Dorsolateral prefrontal cortex (tissue), 120 donors: ENCODE measurements at regions of chr7 and their contacts with region 1.

Region 1: GRCh38 chr7:5494683-5495561 is 71.3 kb upstream of the TNRC18 start:
- DNase-seq: peak; percentile 77 to 88 (median 82)
- H3K4me3 ChIP-seq: peak overlapping the region; percentile 23 to 67 (median 52)
- H3K27ac ChIP-seq: peak overlapping the region; percentile 69 to 99 (median 96)
- H3K27me3 ChIP-seq: no peaks in the 10 kb centered on the region
- CTCF ChIP-seq: peak; percentile 82 to 99 (median 96)

Region 2: DNA sequence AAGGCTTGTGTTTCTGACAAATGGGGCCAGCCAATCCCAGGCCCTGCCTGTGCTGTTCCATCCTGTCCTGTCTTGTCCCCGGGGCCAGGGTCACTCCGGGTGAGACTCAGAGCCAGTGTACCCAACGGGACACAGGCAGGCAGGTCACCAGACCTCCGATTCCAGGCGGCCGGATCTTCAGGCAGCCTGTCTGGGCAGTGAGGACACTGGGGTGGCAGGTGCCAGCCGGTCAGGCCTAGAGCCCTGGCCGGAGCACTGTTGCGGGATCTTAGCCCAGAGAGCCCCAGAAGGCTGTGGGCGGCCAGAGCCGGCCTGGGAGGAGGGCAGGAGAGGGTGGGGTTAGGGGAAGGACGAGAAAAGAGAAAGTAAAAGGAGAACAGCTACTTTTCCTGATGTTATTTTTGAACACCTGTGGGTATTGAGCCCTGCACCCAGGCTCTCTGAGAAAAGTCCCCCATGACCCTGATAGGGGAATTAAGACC is 63.0 kb after region 1 on chr7:
- intact Hi-C with region 1: loop called in 1 of 2 experiments (anchors 1 kb)
- DNase-seq: peak in 6 of 10 donors; percentile 35 to 81 (median 50)
- H3K4me3 ChIP-seq: peak overlapping the region in 28 of 59 donors; percentile 0 to 77 (median 14)
- H3K27ac ChIP-seq: peak overlapping the region; percentile 45 to 99 (median 91)
- H3K27me3 ChIP-seq: no peaks in the 10 kb centered on the region
- CTCF ChIP-seq: no peak

Region 3: DNA sequence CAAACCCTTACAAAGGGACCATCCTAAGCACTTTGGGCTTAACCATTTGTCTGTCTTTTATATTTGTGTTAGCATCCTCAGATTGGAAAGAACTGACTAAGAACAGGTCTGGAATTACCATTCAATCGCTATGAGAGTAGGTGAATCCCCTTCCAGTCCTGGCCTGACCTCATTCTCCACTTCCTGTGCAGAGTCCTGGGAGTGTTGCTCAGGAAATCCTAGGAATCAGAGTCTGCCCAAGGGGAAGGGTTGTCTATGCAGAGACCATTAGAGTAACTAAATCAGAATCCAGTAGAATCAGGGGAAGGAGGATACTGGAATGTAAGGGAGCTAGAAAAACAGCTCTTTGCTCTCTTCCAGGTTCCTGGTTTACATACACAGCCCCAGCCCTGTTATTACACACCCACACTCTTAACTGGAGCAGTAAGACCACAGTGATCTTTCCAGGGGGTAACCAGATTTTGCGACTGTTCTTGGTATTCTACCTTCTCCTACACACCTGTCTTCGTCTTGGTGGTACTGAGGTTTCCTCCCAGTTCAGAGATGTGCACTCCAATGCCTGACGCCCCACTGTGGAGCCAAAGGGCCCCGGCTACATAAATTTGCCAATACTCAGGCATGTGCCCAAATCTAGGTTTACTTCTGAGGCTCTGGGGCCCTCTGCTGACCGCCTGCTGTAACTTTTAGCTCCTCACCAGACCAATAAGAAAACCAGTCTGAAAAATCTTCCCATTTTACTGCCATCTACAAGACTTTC is 182.8 kb after region 1 on chr7:
- intact Hi-C with region 1: loop called (anchors 2 to 5 kb)
- DNase-seq: peak; percentile 57 to 79 (median 72)
- H3K4me3 ChIP-seq: no peak overlapping the region
- H3K27ac ChIP-seq: peak overlapping the region in 41 of 59 donors; percentile 3 to 77 (median 39)
- H3K27me3 ChIP-seq: no peaks in the 10 kb centered on the region
- CTCF ChIP-seq: peak; percentile 42 to 87 (median 78)

Region 4: DNA sequence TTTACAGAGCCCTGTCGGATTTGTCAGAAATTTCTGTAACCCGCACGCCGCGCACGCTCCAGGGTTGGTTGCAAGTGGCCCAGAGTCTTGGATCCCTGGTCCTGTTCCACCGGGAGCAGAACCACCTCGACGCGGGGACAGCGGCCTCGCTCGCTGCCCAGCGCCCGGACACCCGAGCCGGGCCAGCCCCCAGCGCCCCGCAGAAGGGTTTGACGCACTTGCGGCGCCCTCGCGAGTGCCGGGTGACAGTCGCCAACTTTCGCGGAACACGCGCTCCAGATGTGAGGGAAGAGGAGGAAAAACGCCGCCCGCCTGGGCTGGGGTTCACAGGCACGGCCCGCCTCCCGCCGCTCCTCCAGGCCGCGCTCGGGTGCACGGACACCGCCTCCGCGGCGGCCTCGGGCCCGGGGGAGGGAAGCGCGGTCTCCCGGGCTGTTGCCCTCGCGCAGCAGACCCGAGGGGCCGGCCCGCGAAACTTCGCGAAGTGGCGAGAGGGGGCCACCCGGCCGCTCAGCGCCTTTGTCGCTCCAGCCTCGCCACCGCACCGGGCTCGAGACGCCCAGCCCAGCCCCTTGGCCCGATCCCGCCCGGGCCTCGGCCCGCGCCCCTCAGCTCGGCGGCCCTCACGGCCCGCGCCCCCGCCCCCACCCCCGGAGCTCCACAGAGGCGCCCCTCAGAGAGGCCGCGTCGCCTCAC is 286.0 kb after region 1 on chr7:
- intact Hi-C with region 1: loop called in 1 of 2 experiments (anchors 10 kb)
- DNase-seq: peak in 8 of 10 donors; percentile 22 to 65 (median 35)
- H3K4me3 ChIP-seq: peak overlapping the region; percentile 57 to 91 (median 77)
- H3K27ac ChIP-seq: peak overlapping the region; percentile 57 to 95 (median 87)
- H3K27me3 ChIP-seq: no peaks in the 10 kb centered on the region
- CTCF ChIP-seq: no peak